Endothelial cell of umbilical vein (primary cell): ENCODE measurements at regions of chr6 and their contacts with region 1.

Region 1: DNA sequence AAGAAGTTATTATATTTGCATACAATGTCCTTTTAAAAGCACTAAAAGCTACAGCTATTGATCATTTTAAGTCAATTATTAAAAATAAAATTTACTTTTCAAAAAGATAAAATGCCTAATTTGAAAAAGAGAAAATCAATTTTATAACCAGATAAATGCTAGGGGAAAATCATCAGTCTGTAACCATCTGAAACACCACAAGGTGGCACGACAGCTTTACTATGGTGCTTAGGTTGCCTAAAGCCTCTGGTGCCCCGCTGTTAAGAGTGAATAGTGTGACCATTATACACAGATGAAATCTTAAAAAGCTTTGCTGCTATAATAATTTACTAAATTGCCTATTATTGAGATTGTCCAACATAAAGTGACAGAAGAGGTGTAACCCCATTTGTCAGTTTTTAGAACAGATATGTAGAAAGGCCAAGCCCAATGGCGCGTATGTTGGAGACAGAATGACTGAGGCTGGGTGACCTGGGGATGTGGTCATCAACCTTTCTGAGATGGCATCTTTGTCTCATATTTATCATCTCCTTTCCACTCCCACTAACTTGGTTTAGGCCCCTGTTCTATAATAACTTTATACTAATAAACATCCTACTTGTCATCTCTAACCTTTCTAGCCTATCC is 100.8 kb downstream of the MOXD1 start:
- DNase-seq: peak; percentile 53
- H3K4me3 ChIP-seq: no peak overlapping the region
- H3K27ac ChIP-seq: no peak overlapping the region
- H3K4me1 ChIP-seq: no peaks in the 10 kb centered on the region
- H3K27me3 ChIP-seq: peaks cover 12 to 16% of the 10 kb centered on the region in 2 experiments
- CTCF ChIP-seq: peak; percentile 38 to 47
- POLR2A ChIP-seq: no peak

Region 2: DNA sequence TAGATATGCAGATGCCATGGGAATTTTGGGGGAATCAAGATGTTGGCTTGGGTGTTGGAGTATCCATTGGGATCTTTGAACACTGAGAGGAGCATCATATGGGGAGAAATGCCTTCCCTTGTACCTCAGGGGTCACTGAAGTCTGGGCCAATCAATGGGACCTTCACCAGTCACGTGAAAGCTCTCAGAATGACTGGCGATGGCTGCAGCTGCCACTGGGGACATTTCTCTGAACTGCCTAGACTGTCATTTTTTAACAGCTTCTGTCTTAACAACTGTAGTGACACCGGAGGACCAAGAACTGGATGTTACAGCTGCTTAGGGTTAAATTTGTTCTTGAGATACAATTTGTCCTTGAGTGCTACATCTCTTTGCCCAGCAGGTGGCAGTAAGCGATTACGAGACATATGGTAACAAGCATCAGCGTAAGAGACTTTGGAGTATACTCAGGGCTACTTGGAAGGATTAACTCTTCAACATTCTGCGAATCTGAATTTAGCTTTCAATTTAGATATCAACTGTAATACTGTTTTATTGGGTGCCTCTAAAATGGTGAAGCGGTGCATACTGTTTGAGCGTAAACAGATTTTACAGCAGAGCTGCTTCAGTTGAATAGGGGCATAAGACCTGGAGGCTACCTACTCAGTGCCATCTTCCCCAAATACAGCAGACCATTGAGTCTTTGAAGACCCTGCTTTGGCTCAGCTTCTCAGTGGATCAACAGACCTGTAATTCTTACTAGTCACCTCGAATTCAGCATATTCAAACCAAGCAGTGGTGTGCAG is 385.3 kb before region 1 on chr6:
- CTCF ChIA-PET with region 1: interaction called, 66 read pairs
- POLR2A ChIA-PET with region 1: no interaction called
- dilution Hi-C with region 1: no loop called
- intact Hi-C with region 1: loop called (anchors 1 kb)
- DNase-seq: peak; percentile 79
- H3K4me3 ChIP-seq: no peak overlapping the region
- H3K27ac ChIP-seq: no peak overlapping the region
- H3K4me1 ChIP-seq: peaks cover 2% of the 10 kb centered on the region
- H3K27me3 ChIP-seq: peaks cover 0 to 3% of the 10 kb centered on the region in 2 experiments
- CTCF ChIP-seq: peak; percentile 73 to 76
- POLR2A ChIP-seq: no peak

Region 3: GRCh38 chr6:132289756-132290155 is 10.7 kb before region 1 on chr6:
- CTCF ChIA-PET with region 1: interaction called, 360 read pairs
- POLR2A ChIA-PET with region 1: no interaction called
- dilution Hi-C with region 1: no loop called
- intact Hi-C with region 1: no loop called
- DNase-seq: no peak
- H3K4me3 ChIP-seq: no peak overlapping the region
- H3K27ac ChIP-seq: no peak overlapping the region
- H3K4me1 ChIP-seq: no peaks in the 10 kb centered on the region
- H3K27me3 ChIP-seq: peaks cover 0 to 4% of the 10 kb centered on the region in 2 experiments
- CTCF ChIP-seq: no peak
- POLR2A ChIP-seq: no peak

Region 4: DNA sequence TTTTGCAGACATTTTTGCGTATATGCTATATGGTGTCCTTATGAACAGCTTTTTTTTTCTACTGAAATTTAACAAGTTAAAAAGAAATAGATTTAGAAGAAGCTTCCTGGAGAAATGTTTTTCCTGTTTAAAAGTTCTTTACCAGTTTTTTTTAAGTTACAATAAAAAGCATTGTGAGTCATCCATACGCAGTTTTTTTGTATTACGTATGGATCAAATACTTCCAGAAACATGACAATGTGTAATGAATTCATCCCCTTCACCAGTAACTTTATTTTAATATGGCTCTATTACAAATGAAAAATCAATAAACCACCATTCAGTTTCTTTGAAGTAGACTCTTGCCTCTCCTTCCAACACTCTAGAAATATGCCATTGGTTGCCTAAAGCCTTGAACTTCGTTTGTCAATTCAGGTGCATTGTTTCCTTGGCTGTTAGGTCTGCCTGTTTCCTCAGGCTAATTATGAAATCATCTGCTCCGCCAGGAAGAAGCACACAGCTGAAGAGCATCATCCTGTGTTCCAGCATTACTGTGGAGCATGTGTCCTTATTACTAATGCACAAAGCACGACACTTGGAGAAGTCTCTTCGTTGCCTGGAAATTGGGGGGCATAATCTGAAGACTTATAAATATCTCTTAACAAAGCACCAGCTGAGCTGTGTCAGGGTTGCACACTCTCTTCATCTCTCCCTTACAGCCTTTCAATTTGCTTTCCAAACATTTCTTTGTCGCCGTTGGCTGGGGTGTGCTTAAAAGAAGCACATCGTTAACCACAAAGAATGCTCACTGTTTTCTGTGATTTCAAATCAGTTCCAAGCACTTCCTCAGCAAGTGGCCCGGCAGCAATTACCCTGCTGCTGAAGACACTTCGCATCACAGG is 91.2 kb after region 1 on chr6:
- CTCF ChIA-PET with region 1: interaction called, 25 read pairs
- POLR2A ChIA-PET with region 1: no interaction called
- dilution Hi-C with region 1: no loop called
- intact Hi-C with region 1: loop called (anchors 1 kb)
- DNase-seq: no peak
- H3K4me3 ChIP-seq: no peak overlapping the region
- H3K27ac ChIP-seq: no peak overlapping the region
- H3K4me1 ChIP-seq: no peaks in the 10 kb centered on the region
- H3K27me3 ChIP-seq: peaks cover 3 to 21% of the 10 kb centered on the region in 2 experiments
- CTCF ChIP-seq: no peak
- POLR2A ChIP-seq: no peak